Posterior vena cava (tissue), 2 donors: ENCODE measurements at regions of chr16 and their contacts with region 1.

Region 1: GRCh38 chr16:57416122-57416509 is 11.5 kb downstream of the CCL17 start:
- DNase-seq: no peak

Region 2: DNA sequence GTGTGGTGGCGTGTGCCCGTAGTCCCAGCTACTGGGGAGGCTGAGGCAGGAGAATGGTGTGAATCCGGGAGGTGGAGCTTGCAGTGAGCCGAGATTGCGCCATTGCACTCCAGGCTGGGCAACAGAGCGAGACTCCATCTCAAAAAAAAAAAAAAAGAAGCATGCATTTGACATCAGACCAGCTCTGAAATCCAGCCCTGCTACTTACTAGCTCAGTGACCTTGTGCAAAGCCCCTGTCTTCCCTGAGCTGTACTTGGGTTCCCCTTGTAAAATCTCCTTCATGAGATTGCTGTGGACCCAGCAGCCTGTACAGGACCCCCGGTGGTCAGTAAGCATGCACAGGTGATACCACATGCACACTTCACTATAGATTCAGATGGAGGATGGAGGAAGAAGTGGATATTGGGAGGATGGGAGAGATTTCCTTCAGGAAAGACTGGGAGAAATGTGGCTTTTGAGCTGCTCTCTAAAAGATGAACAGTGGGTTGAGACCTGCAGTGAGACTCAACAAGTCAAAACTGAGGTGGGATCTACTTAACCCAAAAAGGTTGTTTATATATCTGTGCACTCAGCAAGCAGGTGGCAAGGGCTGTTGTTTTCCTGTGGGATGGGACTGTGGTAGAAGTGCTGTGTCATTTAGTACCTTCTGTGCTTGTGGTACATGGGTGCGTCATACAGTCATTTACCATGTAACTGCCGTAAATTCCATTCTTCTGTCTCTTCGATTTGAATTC is 477.5 kb before region 1 on chr16:
- intact Hi-C with region 1: loop called in 1 of 2 experiments (anchors 5 kb)
- DNase-seq: no peak

Region 3: GRCh38 chr16:59350670-59351069 is 1934.6 kb after region 1 on chr16:
- intact Hi-C with region 1: no loop called
- DNase-seq: no peak